Activated CD4-positive, alpha-beta T cell treated with anti-CD3 and anti-CD28 coated beads for 36 hours (primary cell): ENCODE measurements at regions of chr15 and their contacts with region 1.

Region 1: GRCh38 chr15:56245871-56246814 is 2.5 kb upstream of the RFX7 start:
- DNase-seq: peak; percentile 94
- ATAC-seq: peak; percentile 66
- H3K4me3 Mint-ChIP-seq: peak overlapping the region; percentile 80
- H3K27ac Mint-ChIP-seq: peak overlapping the region; percentile 96
- H3K4me1 Mint-ChIP-seq: peaks cover 20% of the 10 kb centered on the region
- H3K27me3 Mint-ChIP-seq: no peaks in the 10 kb centered on the region

Region 2: DNA sequence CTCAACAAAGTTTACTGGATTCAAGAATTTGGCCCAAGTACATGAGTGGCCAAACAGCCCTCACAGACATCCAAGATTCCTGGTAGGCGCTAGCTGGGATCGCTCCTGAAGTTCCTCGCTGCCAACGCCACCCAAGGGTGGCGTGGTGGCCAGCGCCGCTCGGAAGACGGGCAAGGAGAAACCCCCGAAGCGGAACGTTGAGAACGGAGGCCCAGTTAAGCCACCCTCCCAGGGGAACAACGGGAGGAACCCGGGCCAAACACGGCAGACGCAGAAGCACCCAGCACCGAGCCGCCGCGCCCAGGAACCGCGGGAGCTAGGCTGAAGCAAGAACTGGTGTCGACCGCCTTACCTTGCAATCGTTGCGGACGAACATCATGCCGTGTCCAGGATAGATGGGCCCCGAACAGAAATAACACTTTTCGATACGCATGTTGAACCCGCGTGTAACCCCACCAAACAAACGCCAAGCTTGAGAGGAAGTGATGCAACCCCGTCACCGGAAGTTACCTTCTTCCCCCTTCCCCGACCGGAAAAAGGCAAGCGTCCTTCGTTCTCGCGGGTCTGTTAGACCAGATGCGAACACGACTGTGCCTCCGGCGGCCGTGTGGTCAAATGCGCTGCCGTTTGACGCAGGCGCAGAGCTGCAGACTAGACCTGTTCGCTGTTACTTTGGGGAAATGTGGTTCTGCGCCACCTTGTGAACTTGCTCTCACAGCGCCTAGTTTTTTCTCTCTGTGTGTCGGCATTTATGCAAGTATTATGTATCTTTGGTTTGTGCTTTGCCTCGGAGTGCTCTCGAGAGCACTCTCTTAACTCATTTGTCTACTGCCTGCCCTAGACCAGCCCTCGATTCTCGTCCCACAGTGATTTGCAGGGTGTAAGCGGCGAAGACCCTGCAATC is 1049.4 kb before region 1 on chr15 and contains the start of gene RSL24D1:
- CTCF ChIA-PET with region 1: no interaction called
- POLR2A ChIA-PET with region 1: no interaction called
- intact Hi-C with region 1: loop called in 1 of 2 experiments (anchors 5 kb)
- DNase-seq: peak; percentile 97
- ATAC-seq: peak; percentile 99
- H3K4me3 Mint-ChIP-seq: no peak within 1 kb of the TSS
- H3K27ac Mint-ChIP-seq: no peak within 1 kb of the TSS
- H3K4me1 Mint-ChIP-seq: peaks cover 17% of the 10 kb centered on the region
- H3K27me3 Mint-ChIP-seq: no peaks in the 10 kb centered on the region
- total RNA-seq, gene RSL24D1: 152 to 188 TPM

Region 3: GRCh38 chr15:55993111-55993803 is 252.9 kb before region 1 on chr15 and contains the start of gene NEDD4:
- CTCF ChIA-PET with region 1: interaction called, 3 read pairs
- POLR2A ChIA-PET with region 1: no interaction called
- intact Hi-C with region 1: loop called (anchors 1 to 5 kb)
- DNase-seq: peak; percentile 86
- ATAC-seq: peak; percentile 91
- H3K4me3 Mint-ChIP-seq: peak within 1 kb of the TSS; percentile 84
- H3K27ac Mint-ChIP-seq: peak within 1 kb of the TSS; percentile 79
- H3K4me1 Mint-ChIP-seq: peaks cover 22% of the 10 kb centered on the region
- H3K27me3 Mint-ChIP-seq: no peaks in the 10 kb centered on the region
- total RNA-seq, gene NEDD4: 22.4 to 23.3 TPM

Region 4: DNA sequence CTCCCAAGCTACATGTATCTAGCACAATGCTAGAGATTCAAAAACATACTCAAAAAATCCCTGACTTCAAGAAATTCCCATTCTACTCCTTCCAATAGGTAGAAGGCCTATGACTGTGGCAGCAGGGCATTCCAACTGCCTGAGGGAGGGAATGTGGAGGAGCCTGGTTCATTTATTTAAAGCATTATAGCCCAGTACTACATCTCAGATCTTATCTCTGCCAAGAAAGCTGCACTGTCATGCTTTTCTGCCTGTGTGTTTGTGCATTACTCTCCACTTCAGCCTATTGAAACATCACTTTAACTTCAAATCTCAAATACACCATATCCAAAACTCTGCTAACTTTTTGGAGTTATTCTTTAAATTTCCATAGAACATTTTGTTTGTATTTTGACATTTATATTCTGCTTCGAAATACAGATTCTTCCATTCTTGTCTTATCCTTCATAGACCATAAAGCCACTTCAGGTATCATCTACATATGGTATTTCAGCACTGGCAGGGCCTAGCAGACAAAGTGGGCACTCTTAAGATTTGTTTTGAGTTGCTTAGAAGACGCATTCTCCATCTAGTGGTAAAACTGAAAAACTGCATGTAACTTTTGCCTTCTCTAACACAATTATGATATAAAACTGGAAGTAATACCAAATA is 193.6 kb before region 1 on chr15:
- CTCF ChIA-PET with region 1: interaction called, 3 read pairs
- POLR2A ChIA-PET with region 1: no interaction called
- intact Hi-C with region 1: loop called in 1 of 2 experiments (anchors 5 kb)
- DNase-seq: peak; percentile 24
- ATAC-seq: peak; percentile 85
- H3K4me3 Mint-ChIP-seq: no peak overlapping the region
- H3K27ac Mint-ChIP-seq: no peak overlapping the region
- H3K4me1 Mint-ChIP-seq: peaks cover 3% of the 10 kb centered on the region
- H3K27me3 Mint-ChIP-seq: no peaks in the 10 kb centered on the region

Region 5: GRCh38 chr15:56365075-56365711 is 119.0 kb after region 1 on chr15 and contains the start of gene TEX9:
- CTCF ChIA-PET with region 1: interaction called, 3 read pairs
- POLR2A ChIA-PET with region 1: no interaction called
- intact Hi-C with region 1: loop called (anchors 1 to 5 kb)
- DNase-seq: peak; percentile 91
- ATAC-seq: peak; percentile 98
- H3K4me3 Mint-ChIP-seq: peak within 1 kb of the TSS; percentile 76
- H3K27ac Mint-ChIP-seq: peak within 1 kb of the TSS; percentile 42
- H3K4me1 Mint-ChIP-seq: peaks cover 13% of the 10 kb centered on the region
- H3K27me3 Mint-ChIP-seq: peaks cover 25% of the 10 kb centered on the region
- total RNA-seq, gene TEX9: 1.5 to 1.8 TPM

Region 6: GRCh38 chr15:56732921-56733797 is 487.0 kb after region 1 on chr15 and contains the start of gene ZNF280D:
- CTCF ChIA-PET with region 1: no interaction called
- POLR2A ChIA-PET with region 1: no interaction called
- intact Hi-C with region 1: loop called in 1 of 2 experiments (anchors 2 kb)
- DNase-seq: peak; percentile 88
- ATAC-seq: peak; percentile 85
- H3K4me3 Mint-ChIP-seq: peak within 1 kb of the TSS; percentile 91
- H3K27ac Mint-ChIP-seq: peak within 1 kb of the TSS; percentile 98
- H3K4me1 Mint-ChIP-seq: peaks cover 32% of the 10 kb centered on the region
- H3K27me3 Mint-ChIP-seq: peaks cover 2% of the 10 kb centered on the region
- total RNA-seq, gene ZNF280D: 18.9 to 19.7 TPM

Region 7: DNA sequence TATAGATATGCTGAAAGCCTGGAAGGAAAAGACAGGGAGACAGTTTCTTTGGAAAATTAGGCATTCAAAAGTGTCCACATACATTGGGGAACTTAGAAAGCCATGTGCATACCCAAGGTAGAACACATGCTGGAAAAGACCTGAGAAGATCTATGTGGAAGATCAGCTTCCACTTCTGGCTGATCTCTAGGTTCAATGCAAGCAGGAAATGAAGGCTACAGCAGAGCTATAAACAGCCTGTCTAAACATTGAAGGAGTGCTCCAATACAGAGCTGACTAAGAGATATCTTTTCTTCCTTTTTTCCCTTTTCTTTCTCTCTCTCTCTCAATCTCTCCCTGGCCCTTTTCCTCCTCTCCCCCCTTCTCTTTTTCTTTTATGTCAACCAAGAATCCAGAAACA is 598.7 kb after region 1 on chr15:
- CTCF ChIA-PET with region 1: no interaction called
- POLR2A ChIA-PET with region 1: no interaction called
- intact Hi-C with region 1: no loop called
- DNase-seq: no peak
- ATAC-seq: no peak
- H3K4me3 Mint-ChIP-seq: no peak overlapping the region
- H3K27ac Mint-ChIP-seq: no peak overlapping the region
- H3K4me1 Mint-ChIP-seq: no peaks in the 10 kb centered on the region
- H3K27me3 Mint-ChIP-seq: no peaks in the 10 kb centered on the region

Region 8: GRCh38 chr15:56886932-56887781 is 641.0 kb after region 1 on chr15:
- CTCF ChIA-PET with region 1: no interaction called
- POLR2A ChIA-PET with region 1: no interaction called
- intact Hi-C with region 1: loop called in 1 of 2 experiments (anchors 10 kb)
- DNase-seq: peak; percentile 89
- ATAC-seq: peak; percentile 96
- H3K4me3 Mint-ChIP-seq: peak overlapping the region; percentile 71
- H3K27ac Mint-ChIP-seq: peak overlapping the region; percentile 86
- H3K4me1 Mint-ChIP-seq: peaks cover 20% of the 10 kb centered on the region
- H3K27me3 Mint-ChIP-seq: no peaks in the 10 kb centered on the region